ENCODE measurements at regions of chr9 and their contacts with region 1.

Region 1: GRCh38 chr9:38662763-38663593 is 42.6 kb upstream of the ANKRD18A start:
- DNase-seq: no peak
- ATAC-seq: no peak
- H3K4me3 ChIP-seq: no peak overlapping the region
- H3K27ac ChIP-seq: no peak overlapping the region
- H3K4me1 ChIP-seq: no peaks in the 10 kb centered on the region
- H3K27me3 ChIP-seq: no peaks in the 10 kb centered on the region
- CTCF ChIP-seq: peak; percentile 29; the same call in 1 of the 2 replicates
- POLR2A ChIP-seq: no peak
- RAD21 ChIP-seq: peak; percentile 42

Region 2: GRCh38 chr9:38713426-38713825 is 50.4 kb after region 1 on chr9:
- CTCF ChIA-PET with region 1: no interaction called
- POLR2A ChIA-PET with region 1: no interaction called
- dilution Hi-C with region 1: no loop called
- in situ Hi-C with region 1: no loop called
- intact Hi-C with region 1: loop called (anchors 10 kb)
- DNase-seq: peak; percentile 57
- ATAC-seq: no peak
- H3K4me3 ChIP-seq: no peak overlapping the region
- H3K27ac ChIP-seq: no peak overlapping the region
- H3K4me1 ChIP-seq: no peaks in the 10 kb centered on the region
- H3K27me3 ChIP-seq: no peaks in the 10 kb centered on the region
- CTCF ChIP-seq: no peak
- POLR2A ChIP-seq: no peak
- RAD21 ChIP-seq: no peak